A673 (cell line): ENCODE measurements at regions of chr2 and their contacts with region 1.

Region 1: DNA sequence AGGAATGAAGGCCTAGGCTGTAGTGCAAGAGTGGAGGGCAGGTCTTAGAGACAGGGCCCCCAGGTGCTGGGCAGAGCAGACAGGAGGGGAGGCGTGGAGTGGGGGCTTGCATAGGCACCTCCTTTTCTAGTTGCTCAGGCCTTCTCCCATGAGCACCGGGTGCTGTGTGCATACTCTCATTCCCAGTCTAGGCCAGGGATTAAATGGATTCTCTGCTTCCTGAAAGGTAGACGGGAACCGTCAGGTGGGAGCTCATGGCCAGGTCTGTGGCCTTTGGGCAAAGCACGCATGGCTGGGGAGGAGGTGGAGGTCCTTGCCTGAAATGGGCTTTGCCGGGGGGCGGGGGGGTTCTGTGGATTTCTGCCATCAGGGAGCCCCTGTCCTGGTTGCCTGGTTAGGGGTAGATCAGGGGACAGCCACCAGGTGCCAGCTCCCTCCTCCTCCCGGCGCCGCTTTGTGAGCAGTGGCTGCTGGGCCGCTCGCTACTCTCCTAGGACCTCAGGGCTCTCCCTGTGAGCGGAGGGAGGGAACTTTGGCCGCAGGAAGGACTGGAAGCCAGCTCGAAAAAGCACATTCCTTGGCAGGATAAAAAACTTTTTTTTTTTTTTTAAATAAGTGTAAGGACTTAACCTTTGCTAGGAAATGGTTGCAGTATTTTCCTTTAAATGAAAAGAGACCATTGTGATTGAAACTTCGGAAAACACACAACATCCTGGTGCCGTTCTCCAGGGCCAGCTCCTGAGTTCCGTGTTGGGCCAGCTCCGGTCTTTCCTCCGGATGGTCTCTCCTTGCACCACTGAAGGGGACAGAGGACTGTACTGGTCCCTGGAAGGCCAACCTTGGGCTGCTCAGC is 82.8 kb upstream of the HAAO start:
- DNase-seq: no peak
- H3K4me3 ChIP-seq: no peak overlapping the region
- H3K27ac ChIP-seq: no peak overlapping the region
- H3K4me1 ChIP-seq: no peaks in the 10 kb centered on the region
- H3K27me3 ChIP-seq: no peaks in the 10 kb centered on the region
- CTCF ChIP-seq: no peak

Region 2: DNA sequence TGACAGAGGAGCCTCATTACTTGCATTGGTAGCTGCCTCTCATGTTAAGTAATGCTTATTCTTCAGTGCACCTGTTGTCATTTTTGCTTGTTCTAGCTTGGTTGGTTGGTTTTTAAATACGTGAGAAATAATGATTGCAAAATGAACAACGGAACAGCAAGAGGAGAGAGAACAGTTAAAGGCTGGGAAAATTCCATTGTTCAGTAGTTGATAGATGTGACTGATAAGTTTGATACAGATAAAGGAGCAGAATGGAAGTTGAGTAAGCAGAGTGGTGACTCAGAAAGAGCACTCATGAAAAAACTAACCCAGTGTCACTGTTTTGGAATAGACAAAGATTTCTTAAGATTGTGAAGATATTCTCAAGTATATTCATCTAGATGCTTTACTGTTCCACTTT is 256.2 kb before region 1 on chr2:
- CTCF ChIA-PET with region 1: no interaction called
- POLR2A ChIA-PET with region 1: no interaction called
- intact Hi-C with region 1: no loop called
- DNase-seq: peak; percentile 32
- H3K4me3 ChIP-seq: no peak overlapping the region
- H3K27ac ChIP-seq: no peak overlapping the region
- H3K4me1 ChIP-seq: peaks cover 9% of the 10 kb centered on the region
- H3K27me3 ChIP-seq: no peaks in the 10 kb centered on the region
- CTCF ChIP-seq: no peak

Region 3: DNA sequence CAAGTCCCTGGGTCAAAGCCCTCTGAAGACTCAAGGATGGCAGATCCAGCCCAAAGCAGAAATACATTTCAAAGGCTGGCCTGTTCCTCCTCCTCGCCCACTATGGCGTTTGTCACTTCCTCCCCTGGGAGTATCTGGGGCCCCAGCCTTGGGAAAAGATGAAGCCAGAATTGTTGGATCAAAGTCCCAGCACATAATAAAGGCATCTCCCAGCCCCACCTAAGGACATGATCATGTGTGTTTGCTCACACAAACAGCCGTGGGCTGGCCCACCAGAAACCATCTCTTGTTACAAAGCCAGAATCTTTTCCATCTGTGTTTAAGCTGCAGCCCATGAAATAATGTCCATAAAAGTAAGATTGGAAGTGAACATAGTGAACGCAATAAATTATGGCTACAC is 32.7 kb before region 1 on chr2:
- CTCF ChIA-PET with region 1: no interaction called
- POLR2A ChIA-PET with region 1: interaction called, 18 read pairs
- intact Hi-C with region 1: no loop called
- DNase-seq: no peak
- H3K4me3 ChIP-seq: no peak overlapping the region
- H3K27ac ChIP-seq: no peak overlapping the region
- H3K4me1 ChIP-seq: no peaks in the 10 kb centered on the region
- H3K27me3 ChIP-seq: no peaks in the 10 kb centered on the region
- CTCF ChIP-seq: no peak

Region 4: GRCh38 chr2:43559391-43560230 is 684.4 kb after region 1 on chr2:
- CTCF ChIA-PET with region 1: no interaction called
- POLR2A ChIA-PET with region 1: interaction called, 23 read pairs
- intact Hi-C with region 1: no loop called
- DNase-seq: no peak
- H3K4me3 ChIP-seq: no peak overlapping the region
- H3K27ac ChIP-seq: no peak overlapping the region
- H3K4me1 ChIP-seq: no peaks in the 10 kb centered on the region
- H3K27me3 ChIP-seq: no peaks in the 10 kb centered on the region
- CTCF ChIP-seq: no peak